ENCODE measurements at regions of chr1 and their contacts with region 1.

Region 1: DNA sequence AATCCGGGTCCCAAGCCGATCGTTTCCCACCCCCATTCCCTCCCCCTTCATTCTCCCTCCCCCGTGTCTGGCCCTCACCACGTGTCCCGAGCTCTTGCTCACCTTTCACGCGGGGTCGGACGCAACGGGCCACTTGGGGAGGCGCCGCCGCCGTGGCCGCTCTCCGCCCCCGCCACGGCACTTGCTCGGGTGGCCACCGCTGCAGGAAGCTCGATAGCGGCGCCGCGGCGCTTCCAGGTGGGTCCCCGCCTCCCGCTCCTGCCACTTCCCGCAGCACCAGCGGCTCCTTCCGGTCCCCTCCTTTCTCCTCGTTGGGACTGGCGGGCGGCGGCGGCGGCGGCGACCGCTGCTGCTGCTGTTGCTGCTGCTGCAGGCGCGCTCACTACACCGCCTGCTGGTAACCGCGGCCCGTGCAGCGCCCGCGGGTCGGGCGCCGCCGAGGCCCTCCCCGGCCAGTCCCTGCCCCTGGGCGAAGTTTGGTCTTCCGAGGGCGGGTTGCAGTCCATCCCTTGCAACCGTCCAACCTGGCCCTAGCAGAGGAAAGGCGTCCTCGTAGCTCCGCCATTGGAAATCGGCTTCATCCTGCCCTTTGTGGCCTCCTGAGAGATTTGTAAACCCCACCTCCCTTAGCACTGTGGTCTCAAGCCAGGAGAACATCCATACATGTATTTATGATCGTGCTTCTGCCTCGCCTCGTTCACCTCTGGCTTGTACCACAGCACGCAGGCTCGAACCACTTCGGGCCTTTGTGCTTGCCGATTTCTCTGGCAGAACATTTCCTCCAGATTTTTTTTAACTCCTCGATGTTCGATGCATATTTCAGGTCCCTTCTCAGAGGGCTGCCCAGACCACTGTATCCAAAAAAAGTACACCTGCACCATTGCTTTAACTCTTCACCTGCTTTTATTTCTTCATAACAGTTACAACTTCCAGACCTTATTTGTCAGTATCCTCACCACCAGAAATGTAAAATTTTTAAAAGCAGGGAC is 996 bp upstream of the ZZZ3 start:
- DNase-seq: peak; percentile 92
- H3K4me3 ChIP-seq: peak overlapping the region; percentile 42 to 73 (median 52)
- H3K27ac ChIP-seq: peak overlapping the region; percentile 69
- H3K4me1 ChIP-seq: peaks cover 23% of the 10 kb centered on the region
- H3K27me3 ChIP-seq: no peaks in the 10 kb centered on the region
- CTCF ChIP-seq: peak; percentile 86 to 92
- POLR2A ChIP-seq: no peak

Region 2: GRCh38 chr1:77219166-77219887 is 464.1 kb before region 1 on chr1 and contains the start of gene PIGK:
- CTCF ChIA-PET with region 1: interaction called, 3 read pairs
- POLR2A ChIA-PET with region 1: no interaction called
- dilution Hi-C with region 1: no loop called
- intact Hi-C with region 1: loop called (anchors 1 kb)
- DNase-seq: peak; percentile 92
- H3K4me3 ChIP-seq: peak within 1 kb of the TSS; percentile 68 to 92 (median 83)
- H3K27ac ChIP-seq: peak within 1 kb of the TSS; percentile 38
- H3K4me1 ChIP-seq: peaks cover 19% of the 10 kb centered on the region
- H3K27me3 ChIP-seq: no peaks in the 10 kb centered on the region
- CTCF ChIP-seq: no peak
- POLR2A ChIP-seq: peak; percentile 46
- total RNA-seq, gene PIGK: 27.0 and 32.3 TPM in 2 replicates

Region 3: DNA sequence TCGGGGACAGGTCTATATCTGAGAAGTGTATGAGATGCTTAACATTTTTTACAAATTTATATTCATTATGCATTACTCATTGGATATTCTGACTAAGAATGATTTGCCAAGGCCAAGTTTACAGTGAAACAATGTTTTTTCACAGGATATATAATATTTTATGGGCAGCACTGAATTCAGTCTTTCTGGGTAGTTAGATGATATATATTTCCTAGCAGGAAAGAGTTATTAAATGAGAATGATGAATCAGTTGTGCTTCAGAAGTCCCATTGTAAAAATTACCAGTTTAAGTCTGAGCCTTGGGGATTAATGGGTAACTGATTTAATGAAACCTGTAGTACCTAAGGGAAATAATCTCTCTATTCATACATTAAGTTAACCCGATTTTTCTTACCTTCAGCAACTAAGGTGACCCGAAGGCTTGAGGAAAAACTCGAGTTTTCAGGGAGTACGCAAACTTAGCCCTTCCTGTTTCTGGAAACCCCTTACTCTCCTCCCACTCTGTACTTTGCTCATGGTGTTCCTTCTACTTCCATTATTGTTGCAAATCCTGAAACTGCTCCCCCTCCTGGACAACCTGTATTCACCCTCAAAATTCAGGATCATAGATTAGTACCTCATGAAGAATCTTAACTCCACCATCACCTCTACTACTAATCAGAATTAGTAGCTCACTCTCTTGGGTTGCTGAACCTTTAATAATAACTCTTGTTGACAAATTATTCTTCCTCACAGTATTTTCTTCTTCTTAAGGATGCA is 266.6 kb before region 1 on chr1:
- CTCF ChIA-PET with region 1: no interaction called
- POLR2A ChIA-PET with region 1: no interaction called
- dilution Hi-C with region 1: no loop called
- intact Hi-C with region 1: loop called (anchors 10 kb)
- DNase-seq: peak; percentile 32
- H3K4me3 ChIP-seq: no peak overlapping the region
- H3K27ac ChIP-seq: no peak overlapping the region
- H3K4me1 ChIP-seq: peaks cover 14% of the 10 kb centered on the region
- H3K27me3 ChIP-seq: no peaks in the 10 kb centered on the region
- CTCF ChIP-seq: peak; percentile 27 to 28
- POLR2A ChIP-seq: no peak

Region 4: GRCh38 chr1:77533660-77534305 is 149.7 kb before region 1 on chr1:
- CTCF ChIA-PET with region 1: interaction called, 9 read pairs
- POLR2A ChIA-PET with region 1: interaction called, 3 read pairs
- dilution Hi-C with region 1: no loop called
- intact Hi-C with region 1: loop called (anchors 2 kb)
- DNase-seq: peak; percentile 80
- H3K4me3 ChIP-seq: no peak overlapping the region
- H3K27ac ChIP-seq: no peak overlapping the region
- H3K4me1 ChIP-seq: peaks cover 22% of the 10 kb centered on the region
- H3K27me3 ChIP-seq: no peaks in the 10 kb centered on the region
- CTCF ChIP-seq: peak; percentile 77 to 81
- POLR2A ChIP-seq: no peak

Region 5: DNA sequence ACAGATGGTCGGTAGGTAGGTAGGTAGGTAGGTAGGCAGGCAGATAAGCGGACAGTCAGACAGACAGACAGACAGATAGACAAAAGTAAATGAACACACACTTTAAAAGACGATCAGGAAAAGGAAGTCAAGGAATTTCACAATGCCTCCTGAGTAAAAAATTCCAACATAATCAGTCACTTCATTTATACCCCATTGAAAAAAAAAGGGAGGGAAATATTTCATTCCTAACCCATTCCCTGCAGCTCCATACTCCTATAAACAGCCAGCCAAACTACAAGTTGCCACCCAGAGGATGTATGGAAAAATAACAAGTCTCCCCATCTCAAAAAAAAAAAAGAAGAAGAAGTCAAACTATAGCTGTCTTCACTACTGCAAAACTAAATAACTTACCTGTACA is 44.4 kb before region 1 on chr1:
- CTCF ChIA-PET with region 1: interaction called, 3 read pairs
- POLR2A ChIA-PET with region 1: no interaction called
- dilution Hi-C with region 1: no loop called
- intact Hi-C with region 1: loop called (anchors 2 kb)
- DNase-seq: peak; percentile 16
- H3K4me3 ChIP-seq: no peak overlapping the region
- H3K27ac ChIP-seq: no peak overlapping the region
- H3K4me1 ChIP-seq: peaks cover 18% of the 10 kb centered on the region
- H3K27me3 ChIP-seq: no peaks in the 10 kb centered on the region
- CTCF ChIP-seq: no peak
- POLR2A ChIP-seq: no peak

Region 6: DNA sequence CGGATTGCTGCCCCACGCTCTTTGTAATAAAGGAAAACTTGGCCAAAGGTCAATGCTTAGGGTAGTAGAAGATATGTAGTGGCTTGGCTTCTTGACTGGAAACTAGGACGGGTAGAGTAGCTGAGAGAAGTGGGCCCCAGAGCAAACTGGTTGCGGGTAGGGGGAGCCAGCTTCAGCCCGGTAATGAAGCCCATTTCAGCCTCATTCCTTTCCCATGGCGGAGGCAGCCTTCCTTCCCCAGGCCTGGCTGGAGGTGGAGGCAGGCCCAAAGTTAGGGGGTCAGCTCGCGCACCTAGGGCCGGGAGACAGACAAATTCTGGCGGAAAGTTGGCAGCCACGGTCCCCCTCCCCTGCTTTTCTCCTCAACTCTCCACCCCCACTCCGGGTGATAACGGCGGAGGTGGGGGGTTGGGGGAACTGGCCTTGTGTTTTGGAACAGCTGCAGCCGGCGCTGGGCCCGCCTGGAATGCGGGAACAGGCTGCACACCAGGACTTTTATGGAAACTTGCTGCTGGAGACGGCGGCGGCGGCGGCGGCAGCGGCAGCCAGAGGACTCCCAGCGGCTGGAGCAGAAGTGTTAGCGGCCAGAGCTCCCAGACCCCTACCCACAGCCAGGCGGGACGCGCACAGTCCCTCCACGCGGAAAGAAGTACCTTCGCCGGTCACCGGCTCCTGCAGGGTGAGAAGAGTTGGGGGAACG is 204.8 kb after region 1 on chr1 and contains the start of gene NEXN:
- CTCF ChIA-PET with region 1: no interaction called
- POLR2A ChIA-PET with region 1: no interaction called
- dilution Hi-C with region 1: no loop called
- intact Hi-C with region 1: loop called (anchors 2 kb)
- DNase-seq: peak; percentile 80
- H3K4me3 ChIP-seq: peak within 1 kb of the TSS; percentile 85 to 96 (median 88)
- H3K27ac ChIP-seq: peak within 1 kb of the TSS; percentile 96
- H3K4me1 ChIP-seq: peaks cover 19% of the 10 kb centered on the region
- H3K27me3 ChIP-seq: no peaks in the 10 kb centered on the region
- CTCF ChIP-seq: no peak
- POLR2A ChIP-seq: no peak
- total RNA-seq, gene NEXN: 11.7 and 14.2 TPM in 2 replicates

Region 7: GRCh38 chr1:78101514-78101913 is 418.1 kb after region 1 on chr1:
- CTCF ChIA-PET with region 1: no interaction called
- POLR2A ChIA-PET with region 1: no interaction called
- dilution Hi-C with region 1: no loop called
- intact Hi-C with region 1: loop called (anchors 5 kb)
- DNase-seq: peak; percentile 99
- H3K4me3 ChIP-seq: no peak overlapping the region
- H3K27ac ChIP-seq: peak overlapping the region; percentile 98
- H3K4me1 ChIP-seq: peaks cover 52% of the 10 kb centered on the region
- H3K27me3 ChIP-seq: no peaks in the 10 kb centered on the region
- CTCF ChIP-seq: no peak
- POLR2A ChIP-seq: peak; percentile 60

Region 8: GRCh38 chr1:78387871-78388270 is 704.4 kb after region 1 on chr1:
- CTCF ChIA-PET with region 1: no interaction called
- POLR2A ChIA-PET with region 1: no interaction called
- dilution Hi-C with region 1: no loop called
- intact Hi-C with region 1: no loop called
- DNase-seq: no peak
- H3K4me3 ChIP-seq: no peak overlapping the region
- H3K27ac ChIP-seq: no peak overlapping the region
- H3K4me1 ChIP-seq: no peaks in the 10 kb centered on the region
- H3K27me3 ChIP-seq: peaks cover 0 to 8% of the 10 kb centered on the region in 2 experiments
- CTCF ChIP-seq: no peak
- POLR2A ChIP-seq: no peak